PC-3 (cell line): ENCODE measurements at regions of chr5 and their contacts with region 1.

Region 1: GRCh38 chr5:90940227-90940995 is 381.8 kb downstream of the ADGRV1 start:
- DNase-seq: peak; percentile 53
- ATAC-seq: peak; percentile 71
- H3K4me3 ChIP-seq: no peak overlapping the region
- H3K27ac ChIP-seq: no peak overlapping the region
- H3K4me1 ChIP-seq: peaks cover 19% of the 10 kb centered on the region
- H3K27me3 ChIP-seq: no peaks in the 10 kb centered on the region
- CTCF ChIP-seq: no peak

Region 2: DNA sequence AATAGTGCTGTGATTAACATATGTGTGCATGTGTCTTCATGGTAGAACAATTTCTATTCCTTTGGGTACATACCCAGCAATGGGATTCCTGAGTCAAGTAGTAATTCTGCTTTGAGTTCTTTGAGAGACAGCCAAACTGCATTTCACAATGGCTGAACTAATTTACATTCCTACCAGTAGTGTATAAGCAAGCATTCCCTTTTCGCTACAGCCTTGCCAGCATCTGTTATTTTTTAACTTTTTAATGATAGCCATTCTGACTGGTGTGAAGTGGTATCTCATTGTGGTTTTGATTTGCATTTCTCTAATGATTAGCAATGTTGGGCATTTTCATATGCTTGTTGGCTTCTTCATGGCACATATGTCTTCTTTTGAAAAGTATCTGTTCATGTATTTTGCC is 134.2 kb after region 1 on chr5:
- CTCF ChIA-PET with region 1: no interaction called
- POLR2A ChIA-PET with region 1: no interaction called
- intact Hi-C with region 1: loop called (anchors 5 kb)
- DNase-seq: peak; percentile 21
- ATAC-seq: no peak
- H3K4me3 ChIP-seq: no peak overlapping the region
- H3K27ac ChIP-seq: no peak overlapping the region
- H3K4me1 ChIP-seq: peaks cover 44% of the 10 kb centered on the region
- H3K27me3 ChIP-seq: no peaks in the 10 kb centered on the region
- CTCF ChIP-seq: no peak